ENCODE measurements at regions of chr12 and their contacts with region 1.

Region 1: GRCh38 chr12:45543906-45544315 is 185.6 kb upstream of the ARID2 start:
- DNase-seq: no peak
- ATAC-seq: peak; percentile 73 to 86

Region 2: DNA sequence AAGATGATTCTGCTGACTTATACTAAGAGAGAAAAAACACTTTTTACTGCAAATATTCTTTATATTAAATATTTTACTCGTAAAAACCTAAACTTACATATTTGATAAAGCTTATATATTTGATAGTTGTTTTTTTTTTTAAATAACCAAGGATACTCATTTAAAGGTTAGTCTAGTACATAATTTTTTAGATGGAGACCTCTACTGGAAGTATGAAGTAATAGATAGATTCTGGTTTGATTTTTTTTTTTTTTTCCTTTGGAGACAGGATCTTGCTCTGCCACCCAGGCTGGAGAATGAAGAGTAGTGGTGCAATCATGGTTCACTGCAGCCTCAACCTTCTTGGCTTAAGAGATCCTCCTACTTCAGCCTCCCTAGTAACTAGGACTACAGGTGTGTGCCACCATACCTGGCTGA is 202.0 kb after region 1 on chr12:
- intact Hi-C with region 1: loop called in 1 of 2 experiments (anchors 10 kb)
- DNase-seq: no peak
- ATAC-seq: no peak